ENCODE measurements at regions of chr17 and their contacts with region 1.

Region 1: DNA sequence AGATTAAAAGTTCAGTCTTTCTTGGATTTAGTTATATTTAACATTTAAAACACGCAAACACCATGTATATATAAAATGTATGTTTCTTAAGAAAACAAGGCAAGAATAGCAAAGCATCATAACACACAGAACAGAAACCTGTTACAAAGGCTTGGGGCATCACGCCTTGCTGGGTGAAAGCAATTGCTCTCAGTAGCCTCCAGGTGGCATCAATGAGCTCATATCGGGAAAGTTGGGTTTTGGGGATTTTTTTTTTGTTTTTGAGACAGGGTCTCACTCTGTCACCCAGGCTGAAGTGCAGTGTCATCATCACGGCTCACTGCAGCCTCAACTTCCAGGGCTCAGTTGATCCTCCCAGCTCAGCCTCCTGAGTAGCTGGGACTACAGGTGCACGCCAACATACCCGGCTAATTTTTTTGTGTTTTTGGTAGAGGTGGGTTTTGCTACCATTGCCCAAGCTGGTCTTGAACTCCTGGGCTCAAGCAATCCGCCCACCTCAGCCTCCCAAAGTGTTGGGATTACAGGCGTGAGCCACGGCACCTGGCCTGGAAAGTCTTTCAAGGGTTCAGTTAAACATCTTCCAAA is 56.9 kb downstream of the CYB5D2 start:
- DNase-seq: peak in 1 of 2 experiments; percentile 19
- H3K4me3 ChIP-seq: no peak overlapping the region
- H3K27ac ChIP-seq: no peak overlapping the region
- H3K4me1 ChIP-seq: no peaks in the 10 kb centered on the region
- H3K27me3 ChIP-seq: no peaks in the 10 kb centered on the region
- CTCF ChIP-seq: peak; percentile 89

Region 2: GRCh38 chr17:4263282-4264215 is 63.6 kb after region 1 on chr17 and contains the start of gene ANKFY1:
- CTCF ChIA-PET with region 1: interaction called, 12 read pairs
- POLR2A ChIA-PET with region 1: no interaction called
- intact Hi-C with region 1: no loop called
- DNase-seq: peak; percentile 85 to 98
- H3K4me3 ChIP-seq: peak within 1 kb of the TSS; percentile 64
- H3K27ac ChIP-seq: peak within 1 kb of the TSS; percentile 46
- H3K4me1 ChIP-seq: peaks cover 14% of the 10 kb centered on the region
- H3K27me3 ChIP-seq: no peaks in the 10 kb centered on the region
- CTCF ChIP-seq: no peak
- total RNA-seq, gene ANKFY1: 63.9 and 74.5 TPM in 2 replicates